K562 (cell line): ENCODE measurements at regions of chr2 and their contacts with region 1.

Region 1: DNA sequence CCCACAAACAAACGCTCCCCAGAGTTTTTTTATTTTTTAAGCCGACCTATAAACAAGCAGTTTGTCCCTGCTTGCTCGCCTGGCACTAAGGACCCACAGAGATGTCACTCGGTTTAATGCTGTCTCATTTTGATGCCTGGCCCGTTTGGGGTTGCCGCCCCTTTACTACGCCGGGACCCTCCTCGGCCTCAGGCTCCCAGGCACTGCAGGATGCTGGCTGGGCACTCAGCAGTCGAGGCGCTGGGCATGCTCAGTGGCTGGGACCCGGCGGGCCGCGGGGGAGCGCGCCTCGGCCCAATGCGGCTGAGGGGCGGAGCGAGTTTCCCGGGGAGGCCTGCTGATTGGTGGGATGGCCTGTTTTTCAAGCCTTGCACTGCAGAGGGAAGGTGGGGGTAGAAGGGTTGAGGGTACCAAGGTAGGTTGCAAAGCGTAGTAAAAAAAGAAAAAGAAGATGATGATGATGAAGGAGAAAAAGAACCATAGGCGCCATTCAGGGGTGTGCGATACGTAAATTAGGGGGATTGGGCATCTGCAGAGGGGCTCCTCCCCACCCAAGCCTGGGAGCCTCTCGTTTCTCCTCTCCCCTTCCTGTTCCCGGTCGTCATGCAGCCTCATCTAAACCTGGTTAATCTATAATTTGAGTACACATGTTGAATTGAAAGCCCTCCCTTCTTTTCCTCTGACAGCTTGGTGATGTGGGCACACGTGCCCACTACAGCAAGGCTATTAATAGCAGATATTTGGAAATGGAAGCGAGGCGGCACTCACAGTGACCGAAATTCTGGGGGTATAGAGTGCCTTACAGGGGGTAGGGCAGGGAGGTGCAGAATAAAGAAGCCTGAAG is 1.5 kb upstream of the IRS1 start:
- DNase-seq: peak in 1 of 4 experiments; percentile 15
- ATAC-seq: no peak
- H3K4me3 ChIP-seq: no peak overlapping the region
- H3K27ac ChIP-seq: no peak overlapping the region
- H3K4me1 ChIP-seq: peaks cover 0 to 18% of the 10 kb centered on the region in 2 experiments; a peak in 2 of 5 replicates
- H3K27me3 ChIP-seq: no peaks in the 10 kb centered on the region; a peak in 1 of 5 replicates
- CTCF ChIP-seq: no peak
- EP300 ChIP-seq: no peak
- POLR2A ChIP-seq: no peak
- RAD21 ChIP-seq: no peak

Region 2: DNA sequence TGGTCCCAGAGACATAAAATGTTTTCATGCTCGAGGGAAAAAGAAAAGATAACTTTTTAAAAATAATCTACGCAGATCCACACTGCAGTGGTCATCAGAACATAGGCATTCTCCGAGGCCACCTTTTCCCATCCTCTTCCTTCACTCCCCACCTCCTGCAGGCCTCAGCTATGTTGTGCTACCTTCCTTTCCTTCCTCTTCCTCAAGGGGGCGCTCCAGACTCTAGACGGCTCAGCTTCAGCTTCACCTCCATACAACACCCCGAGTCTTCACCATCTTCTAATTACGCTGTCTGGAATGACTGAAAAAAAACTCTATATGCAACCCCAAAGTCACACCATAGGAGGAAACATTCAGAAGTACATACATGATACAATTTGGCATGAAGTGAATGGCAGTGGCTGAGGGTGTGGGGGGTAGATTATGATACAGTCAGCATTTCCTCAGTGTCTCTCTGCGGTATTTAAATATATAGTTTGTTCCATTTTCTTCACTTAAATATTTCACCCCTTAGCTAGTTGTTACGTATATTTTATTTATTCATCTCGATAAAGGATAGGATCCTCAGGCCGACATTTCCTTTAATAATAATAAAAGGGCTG is 585.2 kb before region 1 on chr2:
- CTCF ChIA-PET with region 1: no interaction called
- POLR2A ChIA-PET with region 1: no interaction called
- in situ Hi-C with region 1: no loop called
- intact Hi-C with region 1: loop called (anchors 2 kb)
- DNase-seq: peak; percentile 2 to 29 (median 12)
- ATAC-seq: peak; percentile 66; the same call in 2 of the 3 replicates
- H3K4me3 ChIP-seq: no peak overlapping the region
- H3K27ac ChIP-seq: no peak overlapping the region
- H3K4me1 ChIP-seq: no peaks in the 10 kb centered on the region
- H3K27me3 ChIP-seq: no peaks in the 10 kb centered on the region
- CTCF ChIP-seq: peak in 2 of 3 experiments; percentile 21 to 24; a peak in 2 of 6 replicates
- EP300 ChIP-seq: no peak
- POLR2A ChIP-seq: no peak
- RAD21 ChIP-seq: peak in 1 of 2 experiments; percentile 26; a peak in 2 of 4 replicates

Region 3: GRCh38 chr2:226234183-226234582 is 567.0 kb before region 1 on chr2:
- CTCF ChIA-PET with region 1: no interaction called
- POLR2A ChIA-PET with region 1: no interaction called
- in situ Hi-C with region 1: loop called (anchors 10 kb)
- intact Hi-C with region 1: no loop called
- DNase-seq: no peak
- ATAC-seq: no peak
- H3K4me3 ChIP-seq: no peak overlapping the region
- H3K27ac ChIP-seq: no peak overlapping the region
- H3K4me1 ChIP-seq: no peaks in the 10 kb centered on the region
- H3K27me3 ChIP-seq: no peaks in the 10 kb centered on the region
- CTCF ChIP-seq: no peak
- EP300 ChIP-seq: no peak
- POLR2A ChIP-seq: no peak
- RAD21 ChIP-seq: no peak

Region 4: DNA sequence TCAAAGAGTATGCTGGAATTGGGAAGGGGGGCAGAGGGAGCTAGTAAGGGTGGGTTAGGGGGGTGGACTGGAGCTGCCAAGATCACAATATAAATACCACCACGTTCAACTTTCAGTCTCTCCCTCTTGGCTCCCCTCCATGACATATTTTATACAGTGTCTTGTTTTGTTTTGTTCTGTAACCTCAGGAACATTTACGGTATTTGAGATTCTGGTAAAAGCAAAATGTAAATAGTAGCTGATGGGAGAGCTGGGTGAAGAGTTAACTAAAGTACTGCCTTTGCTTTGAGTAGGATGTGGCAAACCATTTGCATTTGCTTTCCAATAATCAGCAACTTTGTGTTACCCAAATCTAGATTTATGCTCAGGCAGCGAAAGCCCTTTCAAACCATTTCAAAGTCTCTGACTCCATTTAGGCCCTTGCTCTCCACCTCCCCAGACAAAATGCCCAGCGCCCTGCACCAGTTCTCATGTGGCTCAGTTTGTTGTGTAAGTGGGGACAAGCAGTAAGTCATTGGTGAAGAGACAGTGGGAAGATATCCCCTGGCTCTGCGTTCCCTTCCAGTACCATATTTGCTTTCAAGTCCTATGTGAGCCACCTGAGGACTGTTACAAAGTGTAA is 19.0 kb before region 1 on chr2:
- CTCF ChIA-PET with region 1: no interaction called
- POLR2A ChIA-PET with region 1: no interaction called
- in situ Hi-C with region 1: no loop called
- intact Hi-C with region 1: no loop called
- DNase-seq: no peak
- ATAC-seq: no peak
- H3K4me3 ChIP-seq: no peak overlapping the region
- H3K27ac ChIP-seq: no peak overlapping the region
- H3K4me1 ChIP-seq: no peaks in the 10 kb centered on the region
- H3K27me3 ChIP-seq: no peaks in the 10 kb centered on the region
- CTCF ChIP-seq: no peak
- EP300 ChIP-seq: no peak
- POLR2A ChIP-seq: no peak
- RAD21 ChIP-seq: no peak